ENCODE measurements at regions of chr14 and their contacts with region 1.

Region 1: GRCh38 chr14:57486767-57487379 is 6.8 kb downstream of the CCDC198 start:
- DNase-seq: peak in 1 of 3 donors; percentile 21
- ATAC-seq: no peak
- H3K4me3 ChIP-seq: no peak overlapping the region
- H3K4me1 ChIP-seq: no peaks in the 10 kb centered on the region
- CTCF ChIP-seq: no peak

Region 2: DNA sequence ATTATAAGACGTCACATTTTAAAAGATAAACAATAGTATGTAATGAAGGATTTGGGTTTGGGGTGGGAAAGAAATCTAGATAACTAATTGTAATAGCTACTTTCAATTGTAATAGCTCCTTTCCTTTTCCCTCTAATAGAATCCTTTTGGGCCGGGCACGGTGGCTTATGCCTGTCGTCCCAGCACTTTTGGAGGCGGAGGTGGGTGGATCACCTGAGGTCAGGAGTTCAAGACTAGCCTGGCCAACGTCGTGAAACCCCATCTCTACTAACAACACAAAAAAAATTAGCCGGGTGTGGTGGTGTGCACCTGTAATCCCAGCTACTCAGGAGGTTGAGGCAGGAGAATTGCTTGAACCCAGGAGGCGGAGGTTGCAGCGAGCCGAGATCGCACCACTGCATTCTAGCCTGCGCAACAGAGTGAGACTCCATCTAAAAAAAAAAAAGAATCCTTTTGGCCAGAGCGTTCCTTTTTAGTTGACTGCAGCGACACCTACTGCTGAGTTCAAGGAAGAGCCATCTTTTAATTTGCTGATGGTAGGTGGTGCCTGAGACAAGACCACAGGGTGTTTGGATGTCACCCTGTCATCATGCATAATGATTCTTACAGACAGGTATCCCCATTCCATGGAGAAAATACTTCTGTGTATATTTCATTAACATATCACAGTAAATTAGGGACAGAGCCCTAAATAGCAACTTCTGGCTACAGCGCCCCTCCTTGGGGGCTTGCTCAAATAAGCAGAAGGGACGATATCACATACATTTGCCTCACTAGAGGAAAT is 585.6 kb after region 1 on chr14:
- intact Hi-C with region 1: loop called (anchors 5 to 10 kb)
- DNase-seq: peak in 1 of 3 donors; percentile 41
- ATAC-seq: peak; percentile 75
- H3K4me3 ChIP-seq: no peak overlapping the region
- H3K4me1 ChIP-seq: no peaks in the 10 kb centered on the region
- CTCF ChIP-seq: peak; percentile 13